ENCODE measurements at regions of chr2 and their contacts with region 1.

Region 1: DNA sequence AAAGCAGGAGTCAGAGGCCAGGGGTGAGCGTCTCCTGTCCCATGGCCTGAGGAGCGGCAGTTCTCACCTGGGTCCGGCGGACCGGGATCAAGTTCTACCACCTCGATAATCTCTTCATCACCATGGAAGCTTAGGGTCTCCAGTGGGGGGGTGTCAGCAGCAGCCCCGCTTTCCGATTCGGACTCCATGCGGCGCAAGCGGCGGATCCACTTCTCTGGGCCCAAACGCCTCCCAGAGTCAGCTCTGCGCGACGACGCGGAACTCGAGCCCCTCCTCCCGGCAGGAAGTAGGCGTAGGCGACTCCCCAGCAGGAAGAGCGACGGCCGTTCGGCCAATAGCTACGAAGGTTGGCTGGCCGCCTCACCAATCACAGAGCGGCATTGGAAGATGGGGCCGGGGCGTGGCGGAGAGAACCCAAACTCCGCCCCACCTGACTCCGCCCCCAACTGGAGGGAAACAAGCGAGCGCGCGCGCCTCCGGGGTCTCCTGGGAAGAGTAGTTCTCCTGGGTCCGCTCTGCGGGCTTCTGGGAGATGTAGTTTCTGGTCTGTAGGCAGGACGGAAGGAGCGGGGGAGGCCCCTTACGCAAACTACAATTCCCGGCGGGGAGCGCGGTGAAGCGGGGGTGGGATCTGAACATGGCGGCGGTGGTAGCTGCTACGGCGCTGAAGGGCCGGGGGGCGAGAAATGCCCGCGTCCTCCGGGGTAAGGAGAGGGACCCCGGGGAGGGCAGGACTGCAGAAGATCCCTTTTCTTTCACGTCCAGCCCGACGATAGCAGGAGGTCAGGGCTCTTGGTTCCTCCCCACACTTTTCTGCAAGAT is at the starts of genes AAMP and PNKD:
- DNase-seq: peak; percentile 100
- ATAC-seq: peak; percentile 95
- total RNA-seq, gene AAMP: 50.6 TPM
- total RNA-seq, gene PNKD: 67.0 TPM

Region 2: DNA sequence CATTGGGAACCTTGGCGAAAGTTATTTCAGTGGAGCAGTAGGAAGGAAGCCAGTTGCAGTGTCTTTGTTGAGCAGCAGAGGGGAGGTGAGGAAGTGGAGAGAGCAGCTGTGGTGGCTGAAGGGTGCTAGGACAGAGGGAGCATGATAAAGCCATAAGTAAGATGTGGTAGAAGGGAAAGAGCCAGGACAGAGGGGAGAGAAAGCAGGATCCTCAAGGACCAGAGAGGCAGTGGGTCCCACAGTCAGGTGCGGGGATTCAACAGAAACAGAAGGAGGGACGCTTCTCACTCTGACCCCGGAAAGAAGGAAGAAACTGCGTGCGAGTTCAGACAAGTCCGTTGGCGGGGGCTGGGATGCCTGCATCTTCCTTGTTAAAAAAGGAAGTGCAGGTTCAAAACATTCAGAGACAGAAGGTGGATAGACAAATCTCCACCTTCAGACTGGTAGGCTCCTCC is 144.5 kb before region 1 on chr2 and contains the start of gene CXCR2:
- intact Hi-C with region 1: no loop called
- DNase-seq: peak; percentile 90
- ATAC-seq: peak; percentile 73
- total RNA-seq, gene CXCR2: 1.5 TPM

Region 3: GRCh38 chr2:218216674-218217359 is 53.3 kb before region 1 on chr2 and contains the start of gene ARPC2:
- intact Hi-C with region 1: loop called (anchors 1 kb)
- DNase-seq: peak; percentile 98
- ATAC-seq: peak; percentile 98
- total RNA-seq, gene ARPC2: 142 TPM

Region 4: DNA sequence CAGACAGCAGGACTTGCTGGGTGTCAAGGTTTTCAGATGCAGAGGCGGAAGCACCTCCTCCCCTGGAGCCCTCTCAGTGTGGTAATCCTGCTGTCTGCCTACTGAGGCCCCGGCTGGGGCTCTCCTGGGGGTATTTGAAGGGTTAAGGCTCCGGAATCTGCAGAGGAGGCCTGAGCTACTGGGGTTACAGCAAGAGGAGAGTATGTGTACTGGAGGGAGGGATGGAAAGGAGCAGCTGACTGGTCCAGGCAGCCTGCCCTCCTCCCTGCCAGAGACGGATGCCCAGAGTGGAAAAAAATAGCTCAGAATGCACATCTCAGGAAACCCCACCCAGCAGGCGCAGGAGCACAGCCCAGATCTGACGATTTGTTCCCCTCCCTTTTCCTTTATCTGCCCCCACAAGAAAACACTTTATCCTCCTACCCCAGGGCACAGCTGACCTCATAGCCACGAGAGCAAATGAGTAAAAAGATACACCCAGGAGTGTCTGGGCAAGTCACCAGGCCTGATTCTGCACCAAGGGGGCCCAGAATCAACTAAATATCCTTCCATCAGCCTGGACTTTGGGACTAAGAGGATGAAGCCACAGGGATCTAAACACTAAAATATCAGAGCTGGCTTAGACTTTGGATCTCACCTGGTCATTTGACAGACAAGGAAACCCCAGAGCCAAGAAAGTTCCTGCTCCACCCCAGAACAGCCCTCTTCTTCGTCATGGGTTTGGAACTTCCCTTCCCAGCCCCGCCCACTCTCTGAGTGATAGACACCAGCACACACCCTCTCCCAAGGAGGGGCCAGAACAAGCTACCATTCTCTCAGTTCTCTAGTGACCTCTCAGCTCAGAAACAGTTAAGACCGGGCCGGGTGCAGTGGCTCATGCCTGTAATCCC is 16.7 kb after region 1 on chr2:
- intact Hi-C with region 1: loop called (anchors 1 kb)
- DNase-seq: peak; percentile 93
- ATAC-seq: peak; percentile 89

Region 5: DNA sequence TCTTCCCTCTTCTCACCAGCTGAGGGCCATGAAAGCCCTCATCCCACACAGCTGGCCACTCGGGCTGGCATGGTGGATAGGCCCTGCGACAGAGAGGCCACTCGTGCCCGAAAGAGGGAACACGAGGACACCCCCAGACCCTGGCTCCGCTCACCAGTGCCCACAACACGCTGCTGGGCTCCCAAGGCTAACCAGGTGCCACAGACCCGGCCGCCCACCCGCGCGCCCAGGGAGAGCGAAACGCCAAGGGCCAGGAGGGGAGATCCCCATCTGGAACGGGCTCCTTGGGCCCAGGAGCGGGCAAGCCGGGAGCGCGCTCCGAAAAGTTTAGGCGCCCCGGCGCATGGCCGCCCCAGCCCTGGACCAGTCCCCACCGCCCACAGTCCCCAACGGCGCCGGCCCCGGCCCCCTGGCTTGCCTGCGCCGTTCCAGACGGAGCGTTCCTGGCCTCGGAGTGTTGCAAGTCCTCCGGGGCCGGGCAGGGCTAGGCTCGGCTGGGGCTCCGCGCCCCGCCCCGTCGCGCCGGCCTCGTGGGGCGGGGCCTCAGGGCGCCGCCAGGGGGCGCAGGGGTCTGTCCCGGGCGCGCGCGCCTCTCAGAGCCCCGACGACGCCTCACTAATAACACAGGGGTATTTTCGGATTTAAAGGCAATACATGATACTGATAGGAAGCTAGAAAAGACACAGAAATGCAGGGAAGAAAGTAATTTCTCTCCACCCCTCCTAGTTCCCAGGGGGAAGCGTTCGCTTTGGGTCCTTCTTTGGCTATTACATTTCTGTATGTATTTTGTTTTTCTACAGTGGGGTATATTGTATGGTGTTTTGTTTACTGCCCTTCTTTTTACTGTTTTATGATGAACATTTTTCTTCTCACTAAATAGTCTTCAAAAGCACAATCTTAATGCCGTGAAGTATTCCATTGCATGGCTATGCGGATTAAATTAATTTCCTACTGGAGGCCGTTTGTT is 22.2 kb after region 1 on chr2 and contains the start of gene TMBIM1:
- intact Hi-C with region 1: loop called (anchors 1 kb)
- DNase-seq: peak; percentile 95
- ATAC-seq: peak; percentile 94
- total RNA-seq, gene TMBIM1: 138 TPM

Region 6: GRCh38 chr2:218395797-218396687 is 125.9 kb after region 1 on chr2:
- intact Hi-C with region 1: loop called (anchors 5 kb)
- DNase-seq: peak; percentile 95
- ATAC-seq: peak; percentile 66

Region 7: DNA sequence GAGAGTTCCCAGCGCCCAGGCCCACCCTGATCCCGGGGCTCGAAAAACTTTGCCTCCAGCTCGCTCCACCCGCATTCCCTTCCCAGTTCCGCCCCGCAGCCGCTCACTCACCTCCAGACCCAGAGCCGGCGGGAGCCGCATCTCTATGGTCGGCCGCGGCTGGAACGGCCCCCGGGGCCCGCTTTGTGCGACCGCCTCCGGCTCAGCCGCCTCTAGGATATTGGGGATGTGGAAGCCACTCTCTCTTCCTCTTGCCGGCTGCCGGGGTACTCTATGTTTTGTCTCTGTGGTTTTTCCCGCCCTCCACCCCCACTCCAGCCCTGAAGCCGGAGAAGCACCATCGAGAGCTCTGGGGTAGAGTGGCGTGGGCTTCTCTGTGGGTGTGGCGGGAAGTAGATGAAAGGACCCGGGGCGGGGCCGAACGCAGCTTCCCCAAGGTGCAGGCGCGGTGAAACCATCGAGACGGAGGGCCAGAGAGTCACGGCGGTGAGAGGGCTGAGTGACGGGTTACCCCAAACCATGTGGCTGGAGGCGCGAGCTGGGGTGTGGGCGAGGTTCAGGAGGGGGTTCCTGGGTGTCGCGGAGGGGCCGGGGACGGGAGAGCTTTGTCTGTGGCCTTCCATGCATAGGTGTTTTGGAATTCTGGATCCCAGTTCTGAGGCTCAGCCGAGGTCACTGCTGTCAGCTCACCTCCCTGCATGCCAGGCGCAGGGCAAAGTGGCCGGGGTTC is 389.3 kb after region 1 on chr2 and contains the starts of genes BCS1L and ZNF142:
- intact Hi-C with region 1: loop called (anchors 10 kb)
- DNase-seq: peak; percentile 96
- ATAC-seq: peak; percentile 96
- total RNA-seq, gene BCS1L: 51.1 TPM
- total RNA-seq, gene ZNF142: 18.6 TPM

Measured in Right ventricle myocardium inferior (tissue), 1 donor.